ENCODE measurements at regions of chr10 and their contacts with region 1.

Region 1: DNA sequence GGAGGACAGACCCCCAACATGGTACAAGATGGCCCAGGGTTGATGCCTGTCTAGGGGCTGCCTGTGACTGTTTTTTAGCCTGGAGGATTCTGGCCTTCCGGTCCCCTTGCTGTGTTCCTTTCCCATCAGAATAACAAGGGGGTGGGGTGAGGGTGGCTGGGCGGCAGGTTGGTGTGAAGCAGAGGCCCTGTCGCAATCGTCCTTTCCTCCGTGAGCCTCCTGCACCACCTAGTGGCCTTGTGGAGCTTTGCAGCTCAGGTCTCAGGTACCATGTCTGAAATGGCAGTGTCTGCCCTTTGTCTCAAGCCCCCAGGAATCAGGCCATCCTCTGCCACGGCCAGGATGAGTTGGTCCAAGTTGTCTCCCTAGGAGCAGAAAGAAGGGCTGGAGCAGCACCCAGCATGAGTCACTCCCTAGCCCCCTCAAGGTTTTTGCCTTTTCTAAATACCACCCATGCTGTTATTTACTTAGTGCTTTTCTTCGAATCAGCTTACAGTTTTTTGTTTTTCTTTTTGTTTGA is 24.2 kb downstream of the TACR2 start:
- DNase-seq: peak; percentile 87 to 92 (median 90)
- H3K4me3 ChIP-seq: no peak overlapping the region
- H3K27ac ChIP-seq: no peak overlapping the region
- H3K4me1 ChIP-seq: no peaks in the 10 kb centered on the region
- H3K27me3 ChIP-seq: no peaks in the 10 kb centered on the region
- CTCF ChIP-seq: peak; percentile 99

Region 2: GRCh38 chr10:69073026-69073425 is 319.5 kb before region 1 on chr10:
- intact Hi-C with region 1: no loop called
- DNase-seq: no peak
- H3K4me3 ChIP-seq: no peak overlapping the region
- H3K27ac ChIP-seq: no peak overlapping the region
- H3K4me1 ChIP-seq: no peaks in the 10 kb centered on the region
- H3K27me3 ChIP-seq: no peaks in the 10 kb centered on the region
- CTCF ChIP-seq: no peak

Region 3: DNA sequence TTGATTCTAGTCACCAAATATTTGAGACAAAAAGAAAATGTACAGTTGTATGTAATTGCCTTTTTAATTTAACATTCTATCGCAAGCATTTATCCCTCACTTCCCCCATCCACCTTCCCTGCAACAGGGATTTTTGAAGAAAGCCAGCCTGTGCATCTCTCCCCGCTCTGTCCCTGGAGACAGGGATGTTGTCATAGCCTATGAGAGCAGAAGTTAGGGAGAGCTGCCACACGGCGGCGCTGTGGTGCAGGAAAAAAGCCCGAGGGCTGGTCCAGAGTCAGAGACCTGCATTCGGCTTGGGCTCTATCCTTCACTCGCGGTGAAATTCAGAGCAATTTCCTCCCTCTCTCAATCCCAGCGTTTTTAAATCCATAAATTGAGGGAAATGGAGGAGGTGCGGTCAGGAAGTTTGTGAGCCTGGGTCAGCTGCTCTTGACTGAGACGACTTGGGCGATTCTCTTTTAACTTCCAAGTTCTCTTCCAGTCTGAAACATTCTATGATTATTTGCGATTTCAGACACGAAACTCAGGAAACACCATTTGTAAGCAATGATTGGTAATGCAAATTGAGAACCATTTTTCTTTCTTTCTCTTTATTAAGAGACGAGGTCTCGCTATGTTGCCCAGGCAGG is 154.9 kb before region 1 on chr10:
- intact Hi-C with region 1: loop called (anchors 5 kb)
- DNase-seq: peak; percentile 89 to 91 (median 91)
- H3K4me3 ChIP-seq: no peak overlapping the region
- H3K27ac ChIP-seq: no peak overlapping the region
- H3K4me1 ChIP-seq: peaks cover 0 to 3% (median 0%) of the 10 kb centered on the region in 3 donors
- H3K27me3 ChIP-seq: no peaks in the 10 kb centered on the region
- CTCF ChIP-seq: peak; percentile 97